Caco-2 (cell line): ENCODE measurements at regions of chr2 and their contacts with region 1.

Region 1: GRCh38 chr2:199488772-199489400 is 31.1 kb upstream of the SATB2 start:
- DNase-seq: peak in 1 of 2 experiments; percentile 72
- H3K4me3 ChIP-seq: no peak overlapping the region
- H3K4me3 Mint-ChIP-seq: no peak overlapping the region
- H3K27ac Mint-ChIP-seq: no peak overlapping the region
- H3K4me1 ChIP-seq: no peaks in the 10 kb centered on the region
- H3K4me1 Mint-ChIP-seq: no peaks in the 10 kb centered on the region
- H3K27me3 ChIP-seq: no peaks in the 10 kb centered on the region
- H3K27me3 Mint-ChIP-seq: peaks cover 7% of the 10 kb centered on the region
- CTCF ChIP-seq: peak; percentile 73 to 84

Region 2: GRCh38 chr2:198374375-198375082 is 1114.4 kb before region 1 on chr2:
- CTCF ChIA-PET with region 1: no interaction called
- POLR2A ChIA-PET with region 1: no interaction called
- intact Hi-C with region 1: loop called (anchors 5 kb)
- DNase-seq: peak; percentile 39 to 49
- H3K4me3 ChIP-seq: no peak overlapping the region
- H3K4me3 Mint-ChIP-seq: no peak overlapping the region
- H3K27ac Mint-ChIP-seq: no peak overlapping the region
- H3K4me1 ChIP-seq: no peaks in the 10 kb centered on the region
- H3K4me1 Mint-ChIP-seq: peaks cover 7% of the 10 kb centered on the region
- H3K27me3 ChIP-seq: no peaks in the 10 kb centered on the region
- H3K27me3 Mint-ChIP-seq: peaks cover 10% of the 10 kb centered on the region
- CTCF ChIP-seq: peak; percentile 59 to 60

Region 3: GRCh38 chr2:198930170-198930569 is 558.7 kb before region 1 on chr2:
- CTCF ChIA-PET with region 1: no interaction called
- POLR2A ChIA-PET with region 1: no interaction called
- intact Hi-C with region 1: loop called (anchors 2 kb)
- DNase-seq: peak in 1 of 2 experiments; percentile 30
- H3K4me3 ChIP-seq: no peak overlapping the region
- H3K4me3 Mint-ChIP-seq: no peak overlapping the region
- H3K27ac Mint-ChIP-seq: no peak overlapping the region
- H3K4me1 ChIP-seq: no peaks in the 10 kb centered on the region
- H3K4me1 Mint-ChIP-seq: no peaks in the 10 kb centered on the region
- H3K27me3 ChIP-seq: no peaks in the 10 kb centered on the region
- H3K27me3 Mint-ChIP-seq: peaks cover 4% of the 10 kb centered on the region
- CTCF ChIP-seq: peak; percentile 19 to 44

Region 4: DNA sequence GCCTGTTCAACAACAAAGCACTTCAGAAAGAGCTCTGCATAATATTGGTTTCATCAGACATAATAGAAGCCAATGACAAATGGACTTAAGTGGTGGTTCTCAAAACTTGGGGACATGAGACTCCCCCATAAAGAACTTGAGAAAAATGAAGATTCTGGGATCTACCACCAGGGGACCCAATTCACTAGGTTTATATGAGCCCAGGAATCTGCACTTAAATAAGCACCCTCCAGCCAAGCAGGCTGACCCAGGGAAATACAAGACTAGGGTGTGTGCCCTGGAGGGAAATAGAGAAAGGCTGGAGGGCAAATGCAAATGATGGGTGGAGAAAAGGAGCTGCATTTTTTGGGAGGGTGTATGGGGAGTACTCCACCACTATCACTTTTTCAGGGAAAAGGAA is 83.6 kb before region 1 on chr2:
- CTCF ChIA-PET with region 1: no interaction called
- POLR2A ChIA-PET with region 1: no interaction called
- intact Hi-C with region 1: loop called (anchors 2 kb)
- DNase-seq: no peak
- H3K4me3 ChIP-seq: no peak overlapping the region
- H3K4me3 Mint-ChIP-seq: no peak overlapping the region
- H3K27ac Mint-ChIP-seq: no peak overlapping the region
- H3K4me1 ChIP-seq: no peaks in the 10 kb centered on the region
- H3K4me1 Mint-ChIP-seq: no peaks in the 10 kb centered on the region
- H3K27me3 ChIP-seq: no peaks in the 10 kb centered on the region
- H3K27me3 Mint-ChIP-seq: peaks cover 4% of the 10 kb centered on the region
- CTCF ChIP-seq: peak; percentile 13 to 34

Region 5: GRCh38 chr2:199596549-199596948 is 107.7 kb after region 1 on chr2:
- CTCF ChIA-PET with region 1: interaction called, 7 read pairs
- POLR2A ChIA-PET with region 1: no interaction called
- intact Hi-C with region 1: loop called (anchors 1 kb)
- DNase-seq: peak; percentile 36 to 47
- H3K4me3 ChIP-seq: no peak overlapping the region
- H3K4me3 Mint-ChIP-seq: no peak overlapping the region
- H3K27ac Mint-ChIP-seq: no peak overlapping the region
- H3K4me1 ChIP-seq: no peaks in the 10 kb centered on the region
- H3K4me1 Mint-ChIP-seq: no peaks in the 10 kb centered on the region
- H3K27me3 ChIP-seq: no peaks in the 10 kb centered on the region
- H3K27me3 Mint-ChIP-seq: no peaks in the 10 kb centered on the region
- CTCF ChIP-seq: peak; percentile 55